Prostate gland (tissue), 2 donors: ENCODE measurements at regions of chr3 and their contacts with region 1.

Region 1: DNA sequence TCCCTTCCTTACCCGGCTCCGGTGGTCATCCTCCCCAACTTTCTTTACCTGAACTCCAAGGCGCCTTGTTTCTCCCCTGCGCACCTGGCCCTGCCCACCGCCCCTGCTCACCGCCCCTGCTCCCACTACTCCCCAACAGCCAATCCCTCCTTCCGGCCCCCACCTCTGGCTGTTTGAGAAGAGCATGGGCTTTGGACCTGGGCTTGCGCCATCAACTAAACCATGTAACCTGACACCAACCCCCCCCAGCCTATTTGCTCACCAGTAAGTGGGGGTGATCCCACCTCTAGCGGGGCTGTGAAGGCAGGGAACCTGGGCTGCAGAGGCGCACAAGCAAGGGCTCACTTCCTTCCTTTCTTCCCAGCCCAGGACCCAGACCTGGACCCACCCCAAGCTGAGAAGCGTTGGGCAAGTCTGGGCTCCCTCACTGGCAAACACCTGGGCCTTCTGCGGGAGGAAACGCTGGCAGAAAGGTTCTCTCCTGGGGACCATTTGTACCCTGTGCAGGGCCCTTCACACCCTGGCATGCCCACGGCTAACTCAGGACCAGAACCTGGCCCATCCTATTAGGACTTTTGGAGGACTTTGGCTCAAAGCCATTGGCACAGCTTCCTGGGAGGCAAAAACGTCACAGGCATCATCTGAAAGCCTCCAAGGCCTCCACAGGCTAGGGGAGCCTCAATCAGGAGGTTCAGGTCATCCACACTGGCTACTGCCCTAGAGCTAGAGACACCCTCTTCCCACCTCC is at the start of gene PLXNB1:
- DNase-seq: peak; percentile 93
- H3K4me3 ChIP-seq: peak within 1 kb of the TSS; percentile 74 to 75
- H3K27ac ChIP-seq: peak within 1 kb of the TSS; percentile 90 to 96
- H3K4me1 ChIP-seq: peaks cover 36% of the 10 kb centered on the region
- H3K27me3 ChIP-seq: no peaks in the 10 kb centered on the region
- CTCF ChIP-seq: no peak
- POLR2A ChIP-seq: peak; percentile 34
- total RNA-seq, gene PLXNB1: 115 to 182 TPM

Region 2: GRCh38 chr3:48232734-48233133 is 197.4 kb before region 1 on chr3:
- intact Hi-C with region 1: loop called (anchors 5 kb)
- DNase-seq: peak; percentile 50
- H3K4me3 ChIP-seq: no peak overlapping the region
- H3K27ac ChIP-seq: peak overlapping the region; percentile 74 to 78
- H3K4me1 ChIP-seq: peaks cover 16% of the 10 kb centered on the region
- H3K27me3 ChIP-seq: no peaks in the 10 kb centered on the region
- CTCF ChIP-seq: peak in 3 of 4 experiments; percentile 36 to 69 (median 69)
- POLR2A ChIP-seq: no peak

Region 3: DNA sequence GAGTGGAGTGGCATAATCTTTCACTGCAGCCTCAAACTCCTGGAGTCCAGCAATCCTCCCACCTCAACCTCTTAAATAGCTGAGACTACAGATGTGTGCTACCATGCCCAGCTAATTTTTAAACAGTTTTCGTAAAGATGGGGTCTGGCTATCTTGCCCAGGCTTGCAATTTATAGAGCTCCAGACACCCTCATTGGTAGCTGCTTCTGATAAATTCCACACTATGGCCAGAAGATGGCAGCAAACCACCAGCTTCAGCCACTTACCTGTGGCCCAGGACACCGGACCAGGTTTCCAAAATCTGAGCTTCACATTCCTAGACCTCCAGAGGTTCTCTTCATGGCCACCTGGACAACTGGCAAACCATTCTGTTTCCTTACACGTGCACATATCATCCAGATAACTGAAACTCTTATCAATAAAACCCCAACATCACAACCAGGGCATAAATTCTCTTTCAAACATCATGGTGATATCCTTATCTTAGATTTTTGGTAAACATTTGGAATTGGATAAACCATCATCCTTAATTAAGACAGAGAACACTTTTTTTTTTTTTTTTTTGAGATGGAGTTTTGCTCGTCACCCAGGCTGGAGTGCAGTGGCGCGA is 29.2 kb before region 1 on chr3:
- intact Hi-C with region 1: loop called (anchors 1 kb)
- DNase-seq: peak; percentile 73
- H3K4me3 ChIP-seq: no peak overlapping the region
- H3K27ac ChIP-seq: peak overlapping the region; percentile 75 to 77
- H3K4me1 ChIP-seq: no peaks in the 10 kb centered on the region
- H3K27me3 ChIP-seq: no peaks in the 10 kb centered on the region
- CTCF ChIP-seq: peak; percentile 67 to 94 (median 86)
- POLR2A ChIP-seq: no peak